ENCODE measurements at regions of chr6 and their contacts with region 1.

Region 1: DNA sequence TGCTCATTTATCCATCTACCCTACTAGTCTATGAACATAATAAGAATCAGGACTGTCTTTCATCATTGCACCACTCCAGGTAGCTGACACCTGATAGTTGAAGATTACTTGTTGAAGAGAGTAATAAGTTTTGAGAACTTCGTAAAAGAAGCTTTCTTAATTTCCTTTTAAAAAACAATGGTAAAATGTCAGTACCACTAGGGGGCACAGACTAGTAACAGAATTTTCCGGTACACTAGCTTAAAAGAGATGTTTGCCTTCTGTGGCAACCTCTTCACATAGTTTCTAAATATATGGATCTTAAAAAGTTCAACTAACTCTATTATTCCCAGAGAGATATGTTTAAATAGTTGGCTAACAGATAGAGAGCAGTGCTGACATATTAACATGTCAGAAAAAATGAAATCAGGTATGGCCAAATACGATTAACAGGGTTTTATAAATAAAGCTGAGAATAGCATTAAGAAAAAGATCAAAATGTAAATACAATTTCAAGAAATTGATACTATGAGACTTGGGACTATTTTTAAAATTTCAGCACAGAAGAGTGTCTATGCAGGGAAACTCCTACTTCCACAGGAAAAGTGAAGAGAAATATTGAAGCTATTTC is 5.4 kb upstream of the KCNQ5 start:
- DNase-seq: peak; percentile 58
- H3K4me3 ChIP-seq: no peak overlapping the region
- H3K27ac ChIP-seq: no peak overlapping the region
- H3K4me1 ChIP-seq: peaks cover 24% of the 10 kb centered on the region
- H3K27me3 ChIP-seq: no peaks in the 10 kb centered on the region
- CTCF ChIP-seq: peak; percentile 78

Region 2: GRCh38 chr6:73180763-73181619 is 564.5 kb after region 1 on chr6:
- CTCF ChIA-PET with region 1: no interaction called
- POLR2A ChIA-PET with region 1: no interaction called
- intact Hi-C with region 1: loop called (anchors 2 kb)
- DNase-seq: peak; percentile 86
- H3K4me3 ChIP-seq: peak overlapping the region; percentile 35
- H3K27ac ChIP-seq: peak overlapping the region; percentile 25
- H3K4me1 ChIP-seq: peaks cover 22% of the 10 kb centered on the region
- H3K27me3 ChIP-seq: no peaks in the 10 kb centered on the region
- CTCF ChIP-seq: peak; percentile 93

Measured in A673 (cell line).